Activated T-helper 1 cell treated with anti-CD3 and anti-CD28 coated beads, Interleukin-12 subunit alpha, Interleukin-12 subunit beta, Interleukin-2, Interleukin-4 antibody, amounts not matched to agents 30 ng/mL and 10 ng/mL and 1 ng/mL, durations not matched to agents 14 hours and 24 hours and 36 hours (primary cell): ENCODE measurements at regions of chr1 and their contacts with region 1.

Region 1: GRCh38 chr1:165928075-165928731 is 100.8 kb downstream of the UCK2 start:
- DNase-seq: peak; percentile 20
- H3K4me3 Mint-ChIP-seq: no peak overlapping the region
- H3K27ac Mint-ChIP-seq: no peak overlapping the region
- H3K4me1 Mint-ChIP-seq: peaks cover 8% of the 10 kb centered on the region
- H3K27me3 Mint-ChIP-seq: peaks cover 11% of the 10 kb centered on the region

Region 2: DNA sequence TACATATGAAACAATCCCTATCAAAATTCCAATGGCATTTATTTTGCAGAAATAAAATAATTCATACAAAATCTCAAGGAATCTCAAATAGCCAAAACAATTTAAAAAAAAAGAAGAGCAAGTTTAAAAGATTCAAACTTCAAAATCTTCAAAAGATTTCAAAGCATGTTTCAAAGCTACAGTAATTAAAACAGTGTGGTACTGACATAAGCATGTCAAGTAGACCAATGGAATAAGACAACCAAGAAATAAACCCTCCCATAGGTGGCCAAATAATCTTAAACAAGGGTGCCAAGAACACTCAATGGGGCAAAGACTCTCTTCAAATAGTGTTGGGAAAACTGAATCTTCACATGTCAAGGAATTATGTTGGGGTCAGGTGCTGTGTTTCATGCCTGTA is 128.8 kb before region 1 on chr1:
- intact Hi-C with region 1: no loop called
- DNase-seq: no peak
- H3K4me3 Mint-ChIP-seq: no peak overlapping the region
- H3K27ac Mint-ChIP-seq: no peak overlapping the region
- H3K4me1 Mint-ChIP-seq: no peaks in the 10 kb centered on the region
- H3K27me3 Mint-ChIP-seq: peaks cover 17% of the 10 kb centered on the region

Region 3: DNA sequence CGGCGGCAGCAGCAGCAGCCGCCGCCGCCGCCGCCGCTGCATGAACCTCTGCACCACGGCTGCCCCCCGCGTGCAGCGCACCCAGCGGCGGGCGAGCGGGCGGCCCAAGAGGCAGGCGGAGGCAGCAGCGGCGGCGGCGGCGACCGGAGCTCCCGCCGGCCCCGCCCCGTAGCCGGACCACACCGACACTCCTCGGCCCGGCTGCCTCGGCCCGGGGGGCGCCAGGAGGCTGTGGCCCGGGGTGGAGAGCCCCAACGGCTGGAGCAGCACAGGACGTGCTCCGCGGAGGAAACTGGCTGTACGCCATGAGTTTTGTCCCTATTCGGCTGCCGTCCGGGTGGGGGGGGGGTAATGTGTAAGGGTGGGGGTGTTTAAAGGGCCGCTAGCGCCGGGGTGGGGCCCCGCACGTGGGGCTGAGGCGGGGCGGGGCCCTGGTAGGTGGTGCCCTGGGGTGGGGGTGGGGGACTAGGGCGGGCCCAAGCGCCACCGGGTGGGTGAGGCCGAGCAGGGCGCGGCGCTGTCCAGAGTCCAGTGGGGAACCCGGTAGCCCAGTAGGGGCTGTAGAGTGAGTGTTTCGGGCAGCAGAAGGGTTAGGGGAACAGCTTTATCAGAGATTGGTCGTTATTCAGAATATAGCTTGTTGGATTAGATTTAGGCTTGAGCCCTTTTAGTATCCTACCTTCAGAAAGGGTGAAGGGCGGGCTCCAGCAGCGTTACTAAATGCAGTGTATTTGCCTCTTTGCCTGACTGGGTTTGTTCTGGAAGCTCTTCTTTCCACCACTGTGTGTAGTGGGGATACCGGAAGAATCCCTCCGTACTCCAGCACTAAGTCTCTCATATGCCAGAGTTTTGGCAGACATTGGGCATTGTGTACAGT is 238.7 kb after region 1 on chr1 and contains the start of gene FAM78B:
- intact Hi-C with region 1: loop called (anchors 5 kb)
- DNase-seq: peak; percentile 36
- H3K4me3 Mint-ChIP-seq: peak within 1 kb of the TSS; percentile 83
- H3K27ac Mint-ChIP-seq: no peak within 1 kb of the TSS
- H3K4me1 Mint-ChIP-seq: peaks cover 16% of the 10 kb centered on the region
- H3K27me3 Mint-ChIP-seq: peaks cover 39% of the 10 kb centered on the region
- total RNA-seq, gene FAM78B: 1.0 TPM in 2 replicates

Region 4: GRCh38 chr1:166432655-166433054 is 504.5 kb after region 1 on chr1:
- intact Hi-C with region 1: loop called (anchors 2 kb)
- DNase-seq: no peak
- H3K4me3 Mint-ChIP-seq: no peak overlapping the region
- H3K27ac Mint-ChIP-seq: no peak overlapping the region
- H3K4me1 Mint-ChIP-seq: no peaks in the 10 kb centered on the region
- H3K27me3 Mint-ChIP-seq: no peaks in the 10 kb centered on the region